PC-9 (cell line): ENCODE measurements at regions of chr9 and their contacts with region 1.

Region 1: GRCh38 chr9:128927731-128928411 is 7.1 kb downstream of the PHYHD1 start:
- DNase-seq: peak in 1 of 2 experiments; percentile 70
- H3K4me3 ChIP-seq: no peak overlapping the region
- H3K27ac ChIP-seq: no peak overlapping the region
- H3K4me1 ChIP-seq: no peaks in the 10 kb centered on the region
- H3K27me3 ChIP-seq: no peaks in the 10 kb centered on the region
- CTCF ChIP-seq: peak; percentile 95

Region 2: DNA sequence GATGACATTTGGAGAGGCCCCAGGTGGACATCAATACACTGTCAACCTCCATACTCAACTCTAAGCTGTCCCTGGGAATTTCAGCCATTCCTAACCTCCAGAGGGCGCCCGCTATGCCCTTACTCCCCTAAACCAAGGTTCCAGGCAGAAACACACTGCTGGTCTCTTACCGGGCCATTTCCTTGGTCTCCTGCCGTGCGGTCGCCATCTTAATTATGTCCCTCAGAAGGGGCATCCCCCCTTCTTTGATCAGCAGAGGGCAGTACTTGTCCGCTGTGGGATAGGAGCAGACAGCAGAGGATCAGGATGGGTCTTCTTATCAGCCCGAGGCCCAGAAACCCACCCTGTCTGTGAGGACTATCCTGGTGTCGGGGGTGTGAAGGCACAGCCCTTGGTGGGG is 194.6 kb before region 1 on chr9:
- CTCF ChIA-PET with region 1: no interaction called
- POLR2A ChIA-PET with region 1: no interaction called
- intact Hi-C with region 1: loop called (anchors 5 kb)
- DNase-seq: peak in 1 of 2 experiments; percentile 64
- H3K4me3 ChIP-seq: no peak overlapping the region
- H3K27ac ChIP-seq: no peak overlapping the region
- H3K4me1 ChIP-seq: no peaks in the 10 kb centered on the region
- H3K27me3 ChIP-seq: no peaks in the 10 kb centered on the region
- CTCF ChIP-seq: peak; percentile 70

Region 3: DNA sequence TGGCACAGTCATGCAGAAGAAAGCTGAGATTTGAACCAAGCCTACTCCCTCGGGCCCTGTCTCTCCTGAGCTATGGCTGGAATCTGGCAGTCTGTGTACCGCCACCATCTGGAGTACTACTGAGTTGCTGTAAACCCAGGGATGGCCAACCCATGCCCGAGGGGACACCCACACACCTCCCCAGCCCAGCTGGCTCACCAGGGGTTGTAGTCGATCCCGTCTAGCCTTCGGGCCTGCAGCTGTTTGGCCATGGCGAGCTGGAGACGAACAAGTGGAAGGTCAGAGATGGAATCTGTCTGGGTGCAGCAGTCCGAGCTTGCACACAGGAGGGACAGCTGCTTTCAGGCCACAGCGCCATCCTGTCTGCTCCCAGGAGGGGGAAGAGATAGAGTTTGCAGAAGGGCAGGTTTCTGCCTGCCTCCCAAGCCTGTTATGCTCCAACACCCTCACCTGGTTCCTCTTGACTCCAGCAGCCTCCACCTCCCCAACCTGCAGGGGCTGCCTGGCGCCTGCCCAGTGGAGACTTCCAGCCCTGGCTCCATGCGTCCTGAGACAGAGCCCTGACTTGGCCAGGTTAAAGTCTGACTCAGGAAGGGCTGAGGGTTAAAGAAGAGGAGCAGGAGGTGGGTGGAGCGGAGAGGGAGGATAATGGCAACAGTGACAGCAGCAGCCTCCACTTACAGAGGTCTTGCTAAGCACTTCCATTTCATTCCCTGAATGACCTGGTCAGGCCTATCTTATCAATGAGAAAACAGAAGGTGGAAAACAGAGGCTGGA is 82.5 kb before region 1 on chr9:
- CTCF ChIA-PET with region 1: no interaction called
- POLR2A ChIA-PET with region 1: no interaction called
- intact Hi-C with region 1: no loop called
- DNase-seq: no peak
- H3K4me3 ChIP-seq: no peak overlapping the region
- H3K27ac ChIP-seq: no peak overlapping the region
- H3K4me1 ChIP-seq: no peaks in the 10 kb centered on the region
- H3K27me3 ChIP-seq: no peaks in the 10 kb centered on the region
- CTCF ChIP-seq: no peak

Region 4: GRCh38 chr9:128881901-128882681 is 45.8 kb before region 1 on chr9 and contains the starts of genes KYAT1 and LRRC8A:
- CTCF ChIA-PET with region 1: interaction called, 3 read pairs
- POLR2A ChIA-PET with region 1: no interaction called
- intact Hi-C with region 1: loop called (anchors 1 kb)
- DNase-seq: peak; percentile 89 to 99
- H3K4me3 ChIP-seq: peak within 1 kb of the TSS; percentile 87
- H3K27ac ChIP-seq: peak within 1 kb of the TSS; percentile 77
- H3K4me1 ChIP-seq: peaks cover 20% of the 10 kb centered on the region
- H3K27me3 ChIP-seq: no peaks in the 10 kb centered on the region
- CTCF ChIP-seq: no peak
- total RNA-seq, gene KYAT1: 26.1 and 27.6 TPM in 2 replicates
- total RNA-seq, gene LRRC8A: 90.3 and 95.7 TPM in 2 replicates

Region 5: DNA sequence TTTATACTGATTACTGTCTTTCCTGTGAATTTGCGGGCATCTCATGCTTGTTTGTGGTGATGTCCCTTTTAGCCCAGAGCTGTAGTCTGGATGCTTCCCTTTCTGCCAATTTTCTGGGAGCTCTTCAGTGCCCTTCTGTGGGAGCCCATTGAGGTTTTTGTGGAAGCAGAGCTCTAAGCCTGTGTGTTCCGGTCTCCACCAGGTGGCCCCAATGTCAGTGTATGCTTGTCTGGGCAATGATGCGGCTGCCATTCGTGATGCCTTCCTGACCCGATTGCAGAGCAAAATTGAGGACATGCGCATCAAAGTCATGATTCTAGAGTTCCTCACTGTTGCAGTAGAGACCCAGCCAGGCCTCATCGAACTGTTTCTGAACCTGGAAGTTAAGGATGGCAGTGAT is 65.1 kb after region 1 on chr9:
- CTCF ChIA-PET with region 1: no interaction called
- POLR2A ChIA-PET with region 1: no interaction called
- intact Hi-C with region 1: no loop called
- DNase-seq: no peak
- H3K4me3 ChIP-seq: no peak overlapping the region
- H3K27ac ChIP-seq: no peak overlapping the region
- H3K4me1 ChIP-seq: no peaks in the 10 kb centered on the region
- H3K27me3 ChIP-seq: no peaks in the 10 kb centered on the region
- CTCF ChIP-seq: no peak; the same call in 1 of the 2 replicates